B cell (primary cell): ENCODE measurements at regions of chr13 and their contacts with region 1.

Region 1: GRCh38 chr13:20160847-20161274 is at the start of gene GJA3:
- DNase-seq: peak; percentile 80
- ATAC-seq: peak; percentile 67
- H3K4me3 ChIP-seq: peak within 1 kb of the TSS in 4 of 5 experiments; percentile 44 to 66 (median 60)
- H3K4me3 Mint-ChIP-seq: peak within 1 kb of the TSS; percentile 89
- H3K27ac ChIP-seq: peak within 1 kb of the TSS in 1 of 2 donors; percentile 91
- H3K27ac Mint-ChIP-seq: peak within 1 kb of the TSS; percentile 80
- H3K4me1 ChIP-seq: peaks cover 15 to 20% of the 10 kb centered on the region in 2 donors
- H3K4me1 Mint-ChIP-seq: peaks cover 24% of the 10 kb centered on the region
- H3K27me3 ChIP-seq: peaks cover 0 to 3% (median 1%) of the 10 kb centered on the region in 4 experiments
- H3K27me3 Mint-ChIP-seq: peaks cover 16% of the 10 kb centered on the region
- CTCF ChIP-seq: no peak
- total RNA-seq, gene GJA3: 0.59 and 0.68 TPM in 2 replicates

Region 2: GRCh38 chr13:19782049-19782726 is 378.7 kb before region 1 on chr13:
- CTCF ChIA-PET with region 1: no interaction called
- POLR2A ChIA-PET with region 1: no interaction called
- intact Hi-C with region 1: loop called (anchors 5 kb)
- DNase-seq: peak; percentile 71
- ATAC-seq: peak; percentile 62
- H3K4me3 ChIP-seq: peak overlapping the region; percentile 91 to 98 (median 98)
- H3K4me3 Mint-ChIP-seq: peak overlapping the region; percentile 98
- H3K27ac ChIP-seq: peak overlapping the region; percentile 88 to 92
- H3K27ac Mint-ChIP-seq: peak overlapping the region; percentile 100
- H3K4me1 ChIP-seq: peaks cover 5 to 10% of the 10 kb centered on the region in 2 donors
- H3K4me1 Mint-ChIP-seq: peaks cover 10% of the 10 kb centered on the region
- H3K27me3 ChIP-seq: no peaks in the 10 kb centered on the region
- H3K27me3 Mint-ChIP-seq: no peaks in the 10 kb centered on the region
- CTCF ChIP-seq: no peak

Region 3: DNA sequence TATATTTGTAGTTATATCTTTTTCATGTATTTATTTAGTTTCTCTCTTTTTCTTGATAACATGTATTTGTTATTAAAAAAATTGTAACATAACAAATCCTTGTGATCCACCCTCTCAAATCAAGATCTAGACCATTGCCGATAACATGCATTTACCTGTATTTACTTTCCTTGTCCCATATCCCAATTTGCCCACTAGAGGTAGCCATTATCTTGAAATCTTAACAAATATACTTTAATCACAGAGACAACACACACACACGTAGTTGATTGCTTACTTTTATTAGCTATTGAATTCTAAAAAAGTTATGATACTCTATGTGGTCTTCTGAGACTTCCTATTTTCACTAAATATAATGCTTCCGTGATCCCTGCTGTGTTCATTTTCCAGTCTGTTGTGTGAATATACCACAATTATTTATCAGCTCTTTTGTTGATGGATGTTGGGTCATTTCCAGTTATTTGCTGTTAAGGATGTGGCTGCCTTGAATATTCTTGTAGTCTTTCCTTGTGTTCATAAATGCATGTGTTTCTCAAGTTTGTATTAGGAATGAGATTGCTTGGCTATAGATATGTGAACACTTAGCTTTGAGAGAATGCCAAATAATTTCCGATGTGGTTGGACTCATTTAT is 233.6 kb before region 1 on chr13:
- CTCF ChIA-PET with region 1: interaction called, 3 read pairs
- POLR2A ChIA-PET with region 1: no interaction called
- intact Hi-C with region 1: loop called (anchors 1 kb)
- DNase-seq: peak; percentile 57
- ATAC-seq: peak; percentile 49
- H3K4me3 ChIP-seq: no peak overlapping the region
- H3K4me3 Mint-ChIP-seq: no peak overlapping the region
- H3K27ac ChIP-seq: no peak overlapping the region
- H3K27ac Mint-ChIP-seq: no peak overlapping the region
- H3K4me1 ChIP-seq: no peaks in the 10 kb centered on the region
- H3K4me1 Mint-ChIP-seq: no peaks in the 10 kb centered on the region
- H3K27me3 ChIP-seq: no peaks in the 10 kb centered on the region
- H3K27me3 Mint-ChIP-seq: peaks cover 3% of the 10 kb centered on the region
- CTCF ChIP-seq: peak; percentile 59

Region 4: GRCh38 chr13:19984430-19985218 is 176.2 kb before region 1 on chr13:
- CTCF ChIA-PET with region 1: interaction called, 7 read pairs
- POLR2A ChIA-PET with region 1: no interaction called
- intact Hi-C with region 1: loop called (anchors 1 kb)
- DNase-seq: peak; percentile 48
- ATAC-seq: peak; percentile 63
- H3K4me3 ChIP-seq: no peak overlapping the region
- H3K4me3 Mint-ChIP-seq: no peak overlapping the region
- H3K27ac ChIP-seq: peak overlapping the region in 1 of 2 donors; percentile 23
- H3K27ac Mint-ChIP-seq: no peak overlapping the region
- H3K4me1 ChIP-seq: peaks cover 7 to 12% of the 10 kb centered on the region in 2 donors
- H3K4me1 Mint-ChIP-seq: peaks cover 18% of the 10 kb centered on the region
- H3K27me3 ChIP-seq: no peaks in the 10 kb centered on the region
- H3K27me3 Mint-ChIP-seq: no peaks in the 10 kb centered on the region
- CTCF ChIP-seq: peak; percentile 60

Region 5: GRCh38 chr13:20127577-20128466 is 33.0 kb before region 1 on chr13:
- CTCF ChIA-PET with region 1: interaction called, 6 read pairs
- POLR2A ChIA-PET with region 1: no interaction called
- intact Hi-C with region 1: loop called (anchors 1 kb)
- DNase-seq: peak; percentile 61
- ATAC-seq: peak; percentile 54
- H3K4me3 ChIP-seq: peak overlapping the region; percentile 7 to 70 (median 54)
- H3K4me3 Mint-ChIP-seq: peak overlapping the region; percentile 73
- H3K27ac ChIP-seq: no peak overlapping the region
- H3K27ac Mint-ChIP-seq: no peak overlapping the region
- H3K4me1 ChIP-seq: peaks cover 20 to 31% of the 10 kb centered on the region in 2 donors
- H3K4me1 Mint-ChIP-seq: peaks cover 8% of the 10 kb centered on the region
- H3K27me3 ChIP-seq: peaks cover 0 to 55% (median 30%) of the 10 kb centered on the region in 4 experiments
- H3K27me3 Mint-ChIP-seq: peaks cover 24% of the 10 kb centered on the region
- CTCF ChIP-seq: no peak